ENCODE measurements at regions of chr16 and their contacts with region 1.

Region 1: GRCh38 chr16:19502395-19503131 is 19.3 kb downstream of the GDE1 start:
- H3K4me3 Mint-ChIP-seq: no peak overlapping the region
- H3K27ac Mint-ChIP-seq: no peak overlapping the region
- H3K4me1 Mint-ChIP-seq: peaks cover 3% of the 10 kb centered on the region
- H3K27me3 Mint-ChIP-seq: no peaks in the 10 kb centered on the region

Region 2: DNA sequence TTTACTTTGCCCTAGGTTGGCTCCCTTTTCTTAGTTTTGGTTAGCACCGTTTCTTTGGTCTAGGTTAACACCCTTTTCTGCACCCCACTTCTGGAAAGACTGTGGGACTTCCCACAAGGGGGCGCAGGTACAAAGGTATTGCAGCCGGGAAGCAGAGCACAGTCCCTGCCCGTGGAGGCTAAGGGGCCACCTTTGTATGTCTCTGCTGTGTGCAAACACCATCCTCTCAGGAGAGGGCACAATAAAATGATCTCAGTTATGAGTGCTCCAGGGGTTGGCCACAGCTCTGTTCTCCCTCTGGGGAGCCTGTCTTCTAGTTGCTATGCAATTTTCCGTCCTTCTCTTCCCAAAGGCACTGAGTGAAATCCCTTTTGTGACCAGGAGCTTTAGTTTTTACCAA is 113.3 kb before region 1 on chr16:
- intact Hi-C with region 1: loop called (anchors 1 kb)
- H3K4me3 Mint-ChIP-seq: no peak overlapping the region
- H3K27ac Mint-ChIP-seq: no peak overlapping the region
- H3K4me1 Mint-ChIP-seq: no peaks in the 10 kb centered on the region
- H3K27me3 Mint-ChIP-seq: peaks cover 55% of the 10 kb centered on the region

Region 3: GRCh38 chr16:19532601-19533000 is 30.0 kb after region 1 on chr16:
- intact Hi-C with region 1: no loop called
- H3K4me3 Mint-ChIP-seq: no peak overlapping the region
- H3K27ac Mint-ChIP-seq: no peak overlapping the region
- H3K4me1 Mint-ChIP-seq: no peaks in the 10 kb centered on the region
- H3K27me3 Mint-ChIP-seq: no peaks in the 10 kb centered on the region

Region 4: GRCh38 chr16:19578378-19578971 is 75.9 kb after region 1 on chr16:
- intact Hi-C with region 1: no loop called
- H3K4me3 Mint-ChIP-seq: no peak overlapping the region
- H3K27ac Mint-ChIP-seq: no peak overlapping the region
- H3K4me1 Mint-ChIP-seq: peaks cover 3% of the 10 kb centered on the region
- H3K27me3 Mint-ChIP-seq: no peaks in the 10 kb centered on the region

Measured in dendritic cell treated with granulocyte-macrophage colony-stimulating factor and Interleukin-4, amounts not matched to agents 40 ng/mL and 50 ng/mL, for 4 days (primary cell).